Naive thymus-derived CD4-positive, alpha-beta T cell (primary cell): ENCODE measurements at regions of chr13 and their contacts with region 1.

Region 1: GRCh38 chr13:50524560-50524959 is 318.9 kb downstream of the DLEU7 start:
- DNase-seq: no peak
- ATAC-seq: no peak
- H3K4me3 ChIP-seq: no peak overlapping the region
- H3K4me3 Mint-ChIP-seq: no peak overlapping the region
- H3K27ac ChIP-seq: no peak overlapping the region
- H3K27ac Mint-ChIP-seq: no peak overlapping the region
- H3K4me1 ChIP-seq: no peaks in the 10 kb centered on the region
- H3K4me1 Mint-ChIP-seq: peaks cover 7 to 34% (median 16%) of the 10 kb centered on the region in 7 donors
- H3K27me3 ChIP-seq: no peaks in the 10 kb centered on the region
- H3K27me3 Mint-ChIP-seq: peaks cover 0 to 27% (median 5%) of the 10 kb centered on the region in 5 donors

Region 2: GRCh38 chr13:50512474-50513299 is 11.9 kb before region 1 on chr13:
- CTCF ChIA-PET with region 1: no interaction called
- POLR2A ChIA-PET with region 1: interaction called, 3 read pairs
- intact Hi-C with region 1: loop called in 1 of 2 experiments (anchors 1 kb)
- DNase-seq: peak in 7 of 9 donors; percentile 11 to 41 (median 27)
- ATAC-seq: peak; percentile 76
- H3K4me3 ChIP-seq: peak overlapping the region; percentile 22
- H3K4me3 Mint-ChIP-seq: no peak overlapping the region
- H3K27ac ChIP-seq: peak overlapping the region; percentile 34
- H3K27ac Mint-ChIP-seq: no peak overlapping the region
- H3K4me1 ChIP-seq: peaks cover 15 to 16% of the 10 kb centered on the region in 2 donors
- H3K4me1 Mint-ChIP-seq: peaks cover 0 to 3% (median 0%) of the 10 kb centered on the region in 7 donors
- H3K27me3 ChIP-seq: no peaks in the 10 kb centered on the region
- H3K27me3 Mint-ChIP-seq: peaks cover 0 to 13% (median 0%) of the 10 kb centered on the region in 5 donors

Region 3: GRCh38 chr13:50760751-50761150 is 236.2 kb after region 1 on chr13:
- CTCF ChIA-PET with region 1: no interaction called
- POLR2A ChIA-PET with region 1: no interaction called
- intact Hi-C with region 1: no loop called
- DNase-seq: no peak
- ATAC-seq: no peak
- H3K4me3 ChIP-seq: no peak overlapping the region
- H3K4me3 Mint-ChIP-seq: no peak overlapping the region
- H3K27ac ChIP-seq: no peak overlapping the region
- H3K27ac Mint-ChIP-seq: no peak overlapping the region
- H3K4me1 ChIP-seq: no peaks in the 10 kb centered on the region
- H3K4me1 Mint-ChIP-seq: peaks cover 0 to 10% (median 5%) of the 10 kb centered on the region in 7 donors
- H3K27me3 ChIP-seq: no peaks in the 10 kb centered on the region
- H3K27me3 Mint-ChIP-seq: peaks cover 3 to 17% (median 7%) of the 10 kb centered on the region in 5 donors

Region 4: GRCh38 chr13:51041126-51041525 is 516.6 kb after region 1 on chr13:
- CTCF ChIA-PET with region 1: no interaction called
- POLR2A ChIA-PET with region 1: no interaction called
- intact Hi-C with region 1: no loop called
- DNase-seq: no peak
- ATAC-seq: no peak
- H3K4me3 ChIP-seq: no peak overlapping the region
- H3K4me3 Mint-ChIP-seq: no peak overlapping the region
- H3K27ac ChIP-seq: no peak overlapping the region
- H3K27ac Mint-ChIP-seq: no peak overlapping the region
- H3K4me1 ChIP-seq: no peaks in the 10 kb centered on the region
- H3K4me1 Mint-ChIP-seq: peaks cover 0 to 7% (median 0%) of the 10 kb centered on the region in 7 donors
- H3K27me3 ChIP-seq: no peaks in the 10 kb centered on the region
- H3K27me3 Mint-ChIP-seq: peaks cover 0 to 19% (median 4%) of the 10 kb centered on the region in 5 donors